ENCODE measurements at regions of chr3 and their contacts with region 1.

Region 1: DNA sequence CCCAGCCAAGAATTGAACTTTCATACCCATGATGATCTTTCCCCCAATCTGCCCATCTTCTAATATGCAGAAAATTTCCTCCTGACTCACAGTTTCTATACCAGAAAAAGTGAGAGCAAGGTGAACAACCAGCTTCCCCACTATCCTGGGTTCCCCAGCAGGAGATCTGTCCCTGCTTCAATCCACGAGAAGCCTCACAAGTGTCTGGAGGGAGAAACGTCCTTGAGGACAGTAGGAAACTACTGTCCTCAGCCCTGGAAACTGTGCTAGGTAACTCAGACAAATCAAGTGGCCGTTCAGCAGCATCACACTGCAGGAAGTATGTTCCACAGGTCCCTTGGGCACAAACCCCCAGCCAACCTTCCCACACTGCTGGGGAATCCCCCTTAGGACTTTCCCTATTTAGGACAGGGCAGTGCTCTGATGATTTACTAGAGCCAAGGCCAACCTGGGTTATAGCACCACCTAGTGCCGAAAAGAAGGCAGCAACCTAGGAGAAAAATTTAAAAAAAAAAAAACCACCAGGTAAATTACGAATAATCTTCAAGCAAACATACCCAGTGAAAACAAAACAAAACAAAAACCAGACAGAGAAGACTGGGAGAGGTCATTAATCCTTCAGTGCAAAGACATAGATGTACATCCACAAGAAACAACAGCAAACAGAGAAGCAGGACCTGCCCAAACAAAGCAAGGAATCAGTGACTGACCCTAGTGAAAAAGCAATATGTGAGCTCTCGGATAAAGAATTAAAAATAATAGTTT is 36.0 kb downstream of the MORC1 start:
- DNase-seq: peak; percentile 54
- ATAC-seq: peak; percentile 75
- H3K4me3 ChIP-seq: no peak overlapping the region
- H3K27ac ChIP-seq: no peak overlapping the region
- H3K4me1 ChIP-seq: no peaks in the 10 kb centered on the region
- H3K27me3 ChIP-seq: no peaks in the 10 kb centered on the region
- CTCF ChIP-seq: peak; percentile 77
- POLR2A ChIP-seq: no peak
- RAD21 ChIP-seq: peak; percentile 71

Region 2: GRCh38 chr3:108914774-108915641 is 166.9 kb before region 1 on chr3:
- CTCF ChIA-PET with region 1: no interaction called
- POLR2A ChIA-PET with region 1: no interaction called
- dilution Hi-C with region 1: no loop called
- in situ Hi-C with region 1: no loop called
- intact Hi-C with region 1: loop called (anchors 5 kb)
- DNase-seq: peak; percentile 63
- ATAC-seq: peak; percentile 85
- H3K4me3 ChIP-seq: no peak overlapping the region
- H3K27ac ChIP-seq: no peak overlapping the region
- H3K4me1 ChIP-seq: no peaks in the 10 kb centered on the region
- H3K27me3 ChIP-seq: no peaks in the 10 kb centered on the region
- CTCF ChIP-seq: peak; percentile 80
- POLR2A ChIP-seq: no peak
- RAD21 ChIP-seq: peak; percentile 78

Region 3: GRCh38 chr3:109023656-109024254 is 58.2 kb before region 1 on chr3:
- CTCF ChIA-PET with region 1: interaction called, 6 read pairs
- POLR2A ChIA-PET with region 1: no interaction called
- dilution Hi-C with region 1: no loop called
- in situ Hi-C with region 1: no loop called
- intact Hi-C with region 1: loop called (anchors 2 kb)
- DNase-seq: peak; percentile 47
- ATAC-seq: peak; percentile 63; the same call in 1 of the 2 replicates
- H3K4me3 ChIP-seq: no peak overlapping the region
- H3K27ac ChIP-seq: no peak overlapping the region
- H3K4me1 ChIP-seq: no peaks in the 10 kb centered on the region
- H3K27me3 ChIP-seq: no peaks in the 10 kb centered on the region
- CTCF ChIP-seq: peak; percentile 62
- POLR2A ChIP-seq: no peak
- RAD21 ChIP-seq: peak; percentile 49